Activated naive CD8-positive, alpha-beta T cell treated with anti-CD3 and anti-CD28 coated beads, Interleukin-2, amount 10 ng/mL, durations not matched to agents 7 days and 5 days (primary cell): ENCODE measurements at regions of chr1 and their contacts with region 1.

Region 1: GRCh38 chr1:99969729-99970621 is at the start of gene SLC35A3:
- DNase-seq: peak; percentile 87
- ATAC-seq: peak; percentile 89
- H3K4me3 Mint-ChIP-seq: peak within 1 kb of the TSS; percentile 100
- H3K27ac Mint-ChIP-seq: peak within 1 kb of the TSS; percentile 98
- H3K4me1 Mint-ChIP-seq: peaks cover 22% of the 10 kb centered on the region
- H3K27me3 Mint-ChIP-seq: no peaks in the 10 kb centered on the region
- total RNA-seq, gene SLC35A3: 21.5 to 23.3 TPM

Region 2: DNA sequence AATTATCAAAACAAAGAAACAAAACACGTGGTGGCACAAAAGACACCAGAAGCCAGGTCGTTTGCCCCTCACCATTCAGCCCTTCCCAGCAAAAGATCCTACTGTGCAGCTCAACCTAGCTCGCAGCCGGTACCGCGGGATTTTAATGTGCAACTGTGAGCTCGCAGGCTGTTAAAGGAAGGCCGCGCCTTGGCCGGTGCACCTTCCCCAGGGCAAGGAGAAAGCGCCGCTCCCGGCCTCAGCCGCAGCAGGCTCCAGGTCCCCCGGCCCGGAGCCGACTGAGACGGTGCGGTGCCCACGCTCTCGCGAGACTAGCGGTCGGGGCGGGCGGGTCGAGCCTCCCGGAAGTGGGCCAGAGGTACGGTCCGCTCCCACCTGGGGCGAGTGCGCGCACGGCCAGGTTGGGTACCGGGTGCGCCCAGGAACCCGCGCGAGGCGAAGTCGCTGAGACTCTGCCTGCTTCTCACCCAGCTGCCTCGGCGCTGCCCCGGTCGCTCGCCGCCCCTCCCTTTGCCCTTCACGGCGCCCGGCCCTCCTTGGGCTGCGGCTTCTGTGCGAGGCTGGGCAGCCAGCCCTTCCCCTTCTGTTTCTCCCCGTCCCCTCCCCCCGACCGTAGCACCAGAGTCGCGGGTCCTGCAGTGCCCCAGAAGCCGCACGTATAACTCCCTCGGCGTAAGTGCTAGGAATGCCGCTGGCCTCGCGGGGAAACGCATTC is 120.1 kb before region 1 on chr1 and contains the start of gene AGL:
- POLR2A ChIA-PET with region 1: interaction called, 10 read pairs
- DNase-seq: peak; percentile 90
- ATAC-seq: peak; percentile 98
- H3K4me3 Mint-ChIP-seq: peak within 1 kb of the TSS; percentile 97
- H3K27ac Mint-ChIP-seq: peak within 1 kb of the TSS; percentile 90
- H3K4me1 Mint-ChIP-seq: peaks cover 20% of the 10 kb centered on the region
- H3K27me3 Mint-ChIP-seq: peaks cover 2% of the 10 kb centered on the region
- total RNA-seq, gene AGL: 12.0 to 12.3 TPM

Region 3: GRCh38 chr1:100037927-100038659 is 68.1 kb after region 1 on chr1:
- POLR2A ChIA-PET with region 1: interaction called, 20 read pairs
- DNase-seq: peak; percentile 94
- ATAC-seq: peak; percentile 87
- H3K4me3 Mint-ChIP-seq: peak overlapping the region; percentile 97
- H3K27ac Mint-ChIP-seq: peak overlapping the region; percentile 100
- H3K4me1 Mint-ChIP-seq: peaks cover 41% of the 10 kb centered on the region
- H3K27me3 Mint-ChIP-seq: no peaks in the 10 kb centered on the region

Region 4: DNA sequence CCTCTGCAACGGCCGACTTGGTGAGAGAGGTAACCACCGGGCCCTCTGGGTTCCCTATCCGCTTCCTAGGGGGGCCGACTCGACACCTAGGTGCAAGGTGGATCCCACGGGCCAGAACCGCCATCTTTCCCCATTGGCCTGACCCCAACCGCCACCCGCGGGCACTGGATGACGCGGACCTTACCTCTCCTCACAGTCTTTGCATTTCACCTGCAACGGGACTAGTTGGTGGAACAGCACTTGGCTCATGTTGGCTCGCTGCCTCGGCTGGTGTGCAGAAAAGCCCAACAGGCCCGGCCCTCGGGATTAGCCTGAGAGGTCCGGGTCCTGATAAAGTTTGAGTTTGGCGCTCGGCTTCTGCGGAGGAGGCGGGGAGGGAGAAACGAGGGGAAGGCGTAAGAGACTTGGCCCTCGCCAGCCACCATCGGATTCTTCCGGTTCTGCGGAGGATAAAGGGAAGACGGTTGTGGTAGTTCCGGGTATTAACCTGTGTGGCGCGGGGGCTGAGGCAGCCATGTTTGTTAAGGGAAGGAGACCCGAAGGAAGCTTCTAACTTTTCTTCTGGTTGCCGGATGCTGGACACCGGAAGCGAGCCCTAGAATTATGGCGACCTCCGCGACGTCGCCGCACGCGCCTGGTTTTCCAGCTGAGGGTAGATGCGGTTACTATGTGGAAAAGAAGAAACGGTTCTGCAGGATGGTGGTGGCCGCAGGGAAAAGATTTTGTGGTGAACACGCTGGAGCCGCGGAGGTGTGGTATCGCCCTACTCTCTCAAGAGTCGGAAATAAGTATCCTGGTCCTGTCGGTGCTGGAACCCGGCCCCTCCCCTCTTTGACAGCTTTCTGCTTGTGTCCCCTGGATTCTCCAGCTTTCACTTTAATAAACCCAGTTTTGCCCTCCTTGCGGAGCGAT is 162.8 kb after region 1 on chr1 and contains the starts of genes SASS6 and TRMT13:
- POLR2A ChIA-PET with region 1: interaction called, 10 read pairs
- DNase-seq: peak; percentile 89
- ATAC-seq: peak; percentile 94
- H3K4me3 Mint-ChIP-seq: peak within 1 kb of the TSS; percentile 96
- H3K27ac Mint-ChIP-seq: peak within 1 kb of the TSS; percentile 94
- H3K4me1 Mint-ChIP-seq: peaks cover 33% of the 10 kb centered on the region
- H3K27me3 Mint-ChIP-seq: no peaks in the 10 kb centered on the region
- total RNA-seq, gene SASS6: 11.8 to 13.6 TPM
- total RNA-seq, gene TRMT13: 29.8 to 32.8 TPM

Region 5: DNA sequence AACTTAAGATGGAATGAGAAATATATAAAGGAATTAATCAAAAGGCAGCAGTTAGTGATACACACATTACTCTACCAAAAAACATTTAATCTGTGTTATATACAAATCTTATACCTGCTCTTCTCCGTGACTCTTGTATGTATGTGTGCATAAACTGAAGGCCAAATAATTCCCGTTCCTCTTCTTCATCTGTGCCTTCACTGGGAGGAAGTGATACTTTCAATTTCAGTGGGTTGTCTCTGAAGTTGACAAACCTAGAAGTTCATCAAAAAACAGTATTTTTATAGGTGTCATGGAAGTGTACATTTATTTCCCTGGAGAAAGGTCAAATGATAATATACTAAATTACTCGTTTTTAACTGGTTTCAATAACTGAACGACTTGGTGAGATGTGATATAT is 182.3 kb after region 1 on chr1:
- POLR2A ChIA-PET with region 1: no interaction called
- DNase-seq: no peak
- ATAC-seq: no peak
- H3K4me3 Mint-ChIP-seq: no peak overlapping the region
- H3K27ac Mint-ChIP-seq: no peak overlapping the region
- H3K4me1 Mint-ChIP-seq: peaks cover 6% of the 10 kb centered on the region
- H3K27me3 Mint-ChIP-seq: no peaks in the 10 kb centered on the region